ENCODE measurements at regions of chr13 and their contacts with region 1.

Region 1: DNA sequence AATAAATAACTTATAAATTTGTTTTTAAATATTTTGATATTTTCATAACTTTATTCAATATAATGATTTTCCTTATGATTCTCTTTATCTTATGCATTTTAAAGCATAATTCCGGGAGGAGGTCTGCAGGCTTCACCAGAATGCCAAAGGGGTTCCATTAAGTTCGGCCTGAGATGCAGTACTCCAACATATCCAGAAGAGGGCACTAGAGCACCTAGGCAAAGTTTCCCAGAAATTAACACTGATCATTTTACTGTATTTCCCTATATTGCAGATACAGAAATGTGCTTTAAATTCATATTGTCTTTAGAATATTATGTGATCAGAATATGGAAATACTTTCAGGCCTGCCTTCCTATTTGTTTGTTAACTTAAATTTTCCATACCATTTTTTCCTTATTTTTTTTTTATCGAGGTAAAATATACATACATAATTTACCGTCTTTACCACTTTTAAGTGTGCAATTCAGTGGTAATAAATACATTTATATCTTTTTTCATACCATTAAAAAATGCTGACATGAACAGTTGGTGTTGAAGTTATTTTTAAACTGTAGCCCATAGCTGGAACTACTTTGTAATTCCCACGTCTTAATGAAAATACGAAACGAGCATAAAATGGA is 58.9 kb upstream of the TM9SF2 start:
- DNase-seq: peak in 10 of 14 experiments; percentile 41 to 82 (median 49)
- ATAC-seq: peak; percentile 80
- H3K4me3 ChIP-seq: no peak overlapping the region
- H3K4me3 Mint-ChIP-seq: no peak overlapping the region
- H3K27ac ChIP-seq: no peak overlapping the region
- H3K27ac Mint-ChIP-seq: no peak overlapping the region
- H3K4me1 ChIP-seq: peaks cover 2% of the 10 kb centered on the region
- H3K4me1 Mint-ChIP-seq: peaks cover 15% of the 10 kb centered on the region
- H3K27me3 ChIP-seq: no peaks in the 10 kb centered on the region
- H3K27me3 Mint-ChIP-seq: no peaks in the 10 kb centered on the region
- CTCF ChIP-seq: peak; percentile 100

Region 2: DNA sequence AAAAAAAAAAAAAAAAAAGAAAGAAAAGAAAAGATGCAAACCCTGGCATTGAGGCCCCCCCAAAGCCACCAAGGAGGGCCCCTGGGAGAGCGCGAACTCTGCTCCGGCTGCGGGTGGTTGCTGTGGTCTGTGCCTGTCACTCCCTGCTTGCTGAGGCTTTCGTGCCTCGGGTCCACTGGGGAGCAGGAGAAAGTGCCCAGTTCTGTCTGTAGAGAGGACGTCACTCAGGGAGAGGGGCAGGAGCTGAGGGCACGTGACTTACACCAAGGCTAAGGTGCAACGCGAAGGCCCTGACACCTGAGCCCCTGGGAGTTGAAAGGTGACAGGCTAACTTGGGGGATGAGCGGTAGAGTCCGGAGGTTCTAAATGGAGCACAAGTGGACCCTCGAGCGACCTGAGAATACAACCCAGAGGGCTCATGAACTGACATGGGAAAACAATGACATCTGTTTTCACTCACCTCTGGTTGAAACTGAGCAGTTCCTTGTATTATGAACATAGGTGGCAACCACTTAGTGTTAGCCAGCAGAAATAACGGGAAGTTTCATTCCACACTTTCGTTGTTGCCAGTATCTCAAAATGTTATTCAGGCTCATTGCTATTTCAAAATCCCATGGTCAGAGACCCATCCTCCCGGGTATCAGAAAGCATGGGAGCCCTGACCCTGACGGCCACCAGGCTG is 10.3 kb before region 1 on chr13:
- CTCF ChIA-PET with region 1: no interaction called
- POLR2A ChIA-PET with region 1: no interaction called
- intact Hi-C with region 1: no loop called
- DNase-seq: peak in 2 of 14 experiments; percentile 34 to 53
- ATAC-seq: no peak
- H3K4me3 ChIP-seq: peak overlapping the region; percentile 43
- H3K4me3 Mint-ChIP-seq: peak overlapping the region; percentile 77
- H3K27ac ChIP-seq: peak overlapping the region; percentile 62 to 81
- H3K27ac Mint-ChIP-seq: peak overlapping the region; percentile 84
- H3K4me1 ChIP-seq: peaks cover 64% of the 10 kb centered on the region
- H3K4me1 Mint-ChIP-seq: peaks cover 72% of the 10 kb centered on the region
- H3K27me3 ChIP-seq: no peaks in the 10 kb centered on the region
- H3K27me3 Mint-ChIP-seq: no peaks in the 10 kb centered on the region
- CTCF ChIP-seq: no peak

Region 3: GRCh38 chr13:99614385-99614885 is 172.1 kb after region 1 on chr13:
- CTCF ChIA-PET with region 1: no interaction called
- POLR2A ChIA-PET with region 1: no interaction called
- intact Hi-C with region 1: loop called (anchors 1 to 5 kb)
- DNase-seq: peak in 13 of 14 experiments; percentile 7 to 67 (median 18)
- ATAC-seq: peak; percentile 86
- H3K4me3 ChIP-seq: no peak overlapping the region
- H3K4me3 Mint-ChIP-seq: no peak overlapping the region
- H3K27ac ChIP-seq: no peak overlapping the region
- H3K27ac Mint-ChIP-seq: no peak overlapping the region
- H3K4me1 ChIP-seq: peaks cover 8% of the 10 kb centered on the region
- H3K4me1 Mint-ChIP-seq: peaks cover 64% of the 10 kb centered on the region
- H3K27me3 ChIP-seq: no peaks in the 10 kb centered on the region
- H3K27me3 Mint-ChIP-seq: no peaks in the 10 kb centered on the region
- CTCF ChIP-seq: peak; percentile 34

Region 4: GRCh38 chr13:99648927-99649326 is 206.5 kb after region 1 on chr13:
- CTCF ChIA-PET with region 1: no interaction called
- POLR2A ChIA-PET with region 1: no interaction called
- intact Hi-C with region 1: loop called in 1 of 2 experiments (anchors 5 kb)
- DNase-seq: no peak
- ATAC-seq: no peak
- H3K4me3 ChIP-seq: no peak overlapping the region
- H3K4me3 Mint-ChIP-seq: no peak overlapping the region
- H3K27ac ChIP-seq: no peak overlapping the region
- H3K27ac Mint-ChIP-seq: no peak overlapping the region
- H3K4me1 ChIP-seq: no peaks in the 10 kb centered on the region
- H3K4me1 Mint-ChIP-seq: no peaks in the 10 kb centered on the region
- H3K27me3 ChIP-seq: no peaks in the 10 kb centered on the region
- H3K27me3 Mint-ChIP-seq: no peaks in the 10 kb centered on the region
- CTCF ChIP-seq: no peak

Region 5: DNA sequence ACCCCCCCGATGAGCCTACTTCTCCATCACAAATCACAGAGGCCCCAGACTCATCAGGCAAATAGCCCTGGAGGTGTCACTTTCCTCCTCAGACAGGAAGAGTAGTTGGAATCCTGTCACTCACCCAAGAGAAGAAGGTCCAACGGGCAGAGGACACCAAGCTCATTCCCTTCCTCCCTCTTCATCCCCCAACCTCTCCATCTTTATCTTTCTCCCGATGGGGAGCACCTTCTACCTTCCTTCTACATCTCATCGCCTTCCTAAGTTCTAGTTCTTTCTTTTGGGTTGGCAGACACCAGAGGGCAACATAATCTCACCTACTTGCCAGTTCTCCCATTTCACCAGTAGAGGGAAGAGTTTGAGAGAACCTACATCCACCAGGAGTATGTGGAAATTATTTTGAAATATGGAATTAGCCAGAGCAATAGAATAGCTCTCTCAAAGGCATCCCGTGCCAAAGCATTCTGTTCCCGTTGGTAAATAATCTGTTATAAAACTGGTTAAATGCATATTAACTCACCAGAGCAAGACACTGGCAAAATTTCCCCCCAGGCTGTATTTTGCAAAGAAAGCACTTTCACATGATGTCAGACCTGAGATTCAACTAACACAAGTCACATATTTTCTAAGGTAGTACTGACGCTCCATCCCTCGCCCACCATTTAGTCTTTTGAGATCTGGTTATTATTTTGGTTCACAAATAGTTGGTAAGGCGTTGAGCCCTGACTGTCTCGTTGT is 474.2 kb after region 1 on chr13:
- CTCF ChIA-PET with region 1: no interaction called
- POLR2A ChIA-PET with region 1: no interaction called
- intact Hi-C with region 1: loop called in 1 of 2 experiments (anchors 5 kb)
- DNase-seq: peak in 3 of 14 experiments; percentile 64 to 74 (median 73)
- ATAC-seq: peak; percentile 83
- H3K4me3 ChIP-seq: no peak overlapping the region
- H3K4me3 Mint-ChIP-seq: no peak overlapping the region
- H3K27ac ChIP-seq: no peak overlapping the region
- H3K27ac Mint-ChIP-seq: no peak overlapping the region
- H3K4me1 ChIP-seq: peaks cover 21% of the 10 kb centered on the region
- H3K4me1 Mint-ChIP-seq: peaks cover 8% of the 10 kb centered on the region
- H3K27me3 ChIP-seq: no peaks in the 10 kb centered on the region
- H3K27me3 Mint-ChIP-seq: peaks cover 16% of the 10 kb centered on the region
- CTCF ChIP-seq: peak; percentile 95

Region 6: GRCh38 chr13:100159584-100159983 is 717.2 kb after region 1 on chr13:
- CTCF ChIA-PET with region 1: no interaction called
- POLR2A ChIA-PET with region 1: no interaction called
- intact Hi-C with region 1: no loop called
- DNase-seq: no peak
- ATAC-seq: no peak
- H3K4me3 ChIP-seq: no peak overlapping the region
- H3K4me3 Mint-ChIP-seq: no peak overlapping the region
- H3K27ac ChIP-seq: no peak overlapping the region
- H3K27ac Mint-ChIP-seq: no peak overlapping the region
- H3K4me1 ChIP-seq: no peaks in the 10 kb centered on the region
- H3K4me1 Mint-ChIP-seq: no peaks in the 10 kb centered on the region
- H3K27me3 ChIP-seq: no peaks in the 10 kb centered on the region
- H3K27me3 Mint-ChIP-seq: no peaks in the 10 kb centered on the region
- CTCF ChIP-seq: no peak

Region 7: GRCh38 chr13:100235311-100235901 is 793.0 kb after region 1 on chr13:
- CTCF ChIA-PET with region 1: no interaction called
- POLR2A ChIA-PET with region 1: no interaction called
- intact Hi-C with region 1: loop called in 1 of 2 experiments (anchors 5 kb)
- DNase-seq: peak in 4 of 14 experiments; percentile 27 to 67 (median 65)
- ATAC-seq: no peak
- H3K4me3 ChIP-seq: no peak overlapping the region
- H3K4me3 Mint-ChIP-seq: no peak overlapping the region
- H3K27ac ChIP-seq: no peak overlapping the region
- H3K27ac Mint-ChIP-seq: no peak overlapping the region
- H3K4me1 ChIP-seq: peaks cover 4% of the 10 kb centered on the region
- H3K4me1 Mint-ChIP-seq: no peaks in the 10 kb centered on the region
- H3K27me3 ChIP-seq: no peaks in the 10 kb centered on the region
- H3K27me3 Mint-ChIP-seq: no peaks in the 10 kb centered on the region
- CTCF ChIP-seq: peak; percentile 85

Region 8: GRCh38 chr13:100514788-100515409 is 1072.5 kb after region 1 on chr13:
- CTCF ChIA-PET with region 1: interaction called, 4 read pairs
- POLR2A ChIA-PET with region 1: no interaction called
- intact Hi-C with region 1: loop called (anchors 1 to 2 kb)
- DNase-seq: peak; percentile 57 to 85 (median 66)
- ATAC-seq: peak; percentile 95
- H3K4me3 ChIP-seq: no peak overlapping the region
- H3K4me3 Mint-ChIP-seq: no peak overlapping the region
- H3K27ac ChIP-seq: no peak overlapping the region
- H3K27ac Mint-ChIP-seq: no peak overlapping the region
- H3K4me1 ChIP-seq: peaks cover 12% of the 10 kb centered on the region
- H3K4me1 Mint-ChIP-seq: peaks cover 19% of the 10 kb centered on the region
- H3K27me3 ChIP-seq: no peaks in the 10 kb centered on the region
- H3K27me3 Mint-ChIP-seq: no peaks in the 10 kb centered on the region
- CTCF ChIP-seq: peak; percentile 100

Region 9: GRCh38 chr13:101127741-101128353 is 1685.5 kb after region 1 on chr13:
- CTCF ChIA-PET with region 1: no interaction called
- POLR2A ChIA-PET with region 1: no interaction called
- intact Hi-C with region 1: loop called in 1 of 2 experiments (anchors 10 kb)
- DNase-seq: peak in 5 of 14 experiments; percentile 1 to 57 (median 34)
- ATAC-seq: peak; percentile 73
- H3K4me3 ChIP-seq: no peak overlapping the region
- H3K4me3 Mint-ChIP-seq: no peak overlapping the region
- H3K27ac ChIP-seq: no peak overlapping the region
- H3K27ac Mint-ChIP-seq: no peak overlapping the region
- H3K4me1 ChIP-seq: no peaks in the 10 kb centered on the region
- H3K4me1 Mint-ChIP-seq: no peaks in the 10 kb centered on the region
- H3K27me3 ChIP-seq: no peaks in the 10 kb centered on the region
- H3K27me3 Mint-ChIP-seq: peaks cover 11% of the 10 kb centered on the region
- CTCF ChIP-seq: peak; percentile 72